Tibial artery (tissue), 4 donors: ENCODE measurements at regions of chr5 and their contacts with region 1.

Region 1: DNA sequence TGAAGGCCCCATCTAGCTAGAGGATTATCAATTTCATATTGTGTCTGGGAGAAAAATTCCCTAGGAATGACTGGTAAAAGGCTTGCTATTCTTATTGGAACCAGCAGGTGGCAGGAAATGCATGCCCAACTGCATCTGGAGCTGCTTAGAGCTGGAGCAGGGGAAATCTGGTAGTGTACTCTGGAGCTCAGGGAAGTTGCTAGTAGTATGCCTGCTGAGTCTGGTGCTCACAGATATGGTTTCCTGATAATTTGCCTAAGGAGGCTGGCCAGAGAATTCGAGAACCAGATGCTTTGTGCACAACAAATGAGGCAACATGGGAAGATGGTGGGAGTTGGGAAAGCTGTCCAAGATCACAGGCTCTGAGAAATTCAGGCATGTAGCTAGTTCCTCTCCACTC is 53.7 kb downstream of the G3BP1 start:
- DNase-seq: peak in 1 of 2 donors; percentile 45
- H3K4me3 ChIP-seq: no peak overlapping the region
- H3K27ac ChIP-seq: no peak overlapping the region
- H3K4me1 ChIP-seq: no peaks in the 10 kb centered on the region
- H3K27me3 ChIP-seq: no peaks in the 10 kb centered on the region
- CTCF ChIP-seq: peak; percentile 79 to 92

Region 2: DNA sequence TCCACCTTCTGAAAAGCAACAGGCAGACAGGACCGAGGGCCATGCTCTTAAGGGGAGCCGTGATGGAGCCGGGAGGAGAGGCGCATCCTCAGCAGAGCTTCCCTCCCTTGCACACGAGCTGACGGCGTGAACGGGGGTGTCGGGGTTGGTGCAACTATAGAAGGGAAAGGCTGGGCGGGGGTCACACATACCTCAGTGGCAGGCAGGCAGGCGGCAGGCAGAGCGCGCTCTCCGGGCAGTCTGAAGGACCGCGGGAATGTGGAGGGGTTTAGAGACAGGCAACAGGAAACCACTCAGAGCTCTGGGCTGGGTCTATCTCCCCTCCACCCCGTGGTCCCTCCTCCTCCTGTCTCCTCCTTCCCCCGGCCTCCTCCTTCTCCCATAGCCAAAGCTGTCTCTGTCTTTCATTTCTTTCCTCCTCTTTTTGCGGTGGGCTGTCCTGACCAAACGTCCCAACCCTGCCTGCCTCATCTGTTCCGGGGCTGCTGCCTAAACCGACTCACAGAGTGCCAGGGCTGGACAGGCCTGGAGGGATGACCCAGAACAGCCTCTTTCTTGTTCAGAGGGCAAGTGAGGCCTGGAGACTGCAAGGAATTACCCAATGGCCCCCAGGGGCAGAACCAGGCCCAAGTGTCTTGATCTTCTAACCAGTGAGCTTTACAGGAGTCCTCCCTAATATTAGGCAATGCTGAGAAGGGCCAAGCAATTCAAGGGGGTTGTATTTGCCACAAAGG is 138.6 kb before region 1 on chr5 and contains the start of gene SPARC:
- intact Hi-C with region 1: no loop called
- DNase-seq: peak; percentile 94 to 96
- H3K4me3 ChIP-seq: peak within 1 kb of the TSS; percentile 66 to 75
- H3K27ac ChIP-seq: peak within 1 kb of the TSS; percentile 89 to 91
- H3K4me1 ChIP-seq: peaks cover 0 to 41% (median 23%) of the 10 kb centered on the region in 4 donors
- H3K27me3 ChIP-seq: no peaks in the 10 kb centered on the region
- CTCF ChIP-seq: peak in 1 of 2 experiments; percentile 3

Region 3: DNA sequence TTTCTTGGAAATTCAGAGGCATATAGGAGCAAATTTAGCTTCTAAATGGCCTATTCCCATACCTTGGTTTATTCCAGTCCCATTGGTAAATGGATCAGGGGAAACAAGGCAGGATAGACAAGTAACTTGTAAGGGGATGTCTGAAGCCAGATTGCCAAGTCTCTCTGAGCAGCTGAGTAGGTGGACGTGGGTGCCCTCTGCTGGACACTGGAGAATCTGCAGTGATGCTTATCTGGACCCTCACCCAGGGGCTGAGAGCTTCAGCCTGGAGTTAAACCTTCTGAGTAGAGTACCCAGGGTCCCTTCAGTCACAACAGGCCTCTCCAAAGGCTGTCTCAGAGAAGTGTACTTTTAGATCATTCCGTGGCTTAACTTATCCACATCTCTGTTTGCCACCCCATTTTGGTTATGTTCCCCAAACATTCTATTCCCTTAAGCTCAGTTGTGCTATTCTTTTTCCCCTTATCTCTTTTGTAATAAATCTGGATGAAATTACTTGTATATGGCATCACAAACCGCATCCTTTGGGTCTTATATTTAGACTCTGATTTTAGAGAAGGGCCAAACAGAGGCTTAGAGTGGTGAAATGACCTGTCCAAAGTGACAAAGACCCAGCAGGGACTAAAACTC is 317.5 kb after region 1 on chr5:
- intact Hi-C with region 1: loop called (anchors 5 kb)
- DNase-seq: peak; percentile 37 to 67
- H3K4me3 ChIP-seq: no peak overlapping the region
- H3K27ac ChIP-seq: no peak overlapping the region
- H3K4me1 ChIP-seq: no peaks in the 10 kb centered on the region
- H3K27me3 ChIP-seq: no peaks in the 10 kb centered on the region
- CTCF ChIP-seq: peak; percentile 76 to 87

Region 4: DNA sequence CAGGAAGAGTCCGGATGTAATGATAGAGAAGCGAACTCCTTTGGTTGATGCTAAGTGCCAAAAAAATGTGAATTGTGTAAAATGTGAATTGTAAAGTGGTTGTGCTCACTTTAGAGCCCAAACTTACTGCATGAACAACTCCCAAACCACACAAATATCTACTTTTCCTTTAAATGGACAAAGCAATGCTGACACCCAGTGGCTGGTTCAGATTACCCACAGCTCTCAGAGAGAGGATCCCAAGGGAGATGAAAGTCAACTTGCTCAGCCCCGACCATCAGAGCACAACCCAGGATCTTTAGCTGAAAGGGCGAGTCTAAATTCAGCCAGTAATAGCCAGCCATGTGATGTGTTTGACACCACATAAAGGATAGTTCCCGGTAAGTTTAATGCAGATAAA is 446.0 kb after region 1 on chr5:
- intact Hi-C with region 1: loop called (anchors 10 kb)
- DNase-seq: no peak
- H3K4me3 ChIP-seq: no peak overlapping the region
- H3K27ac ChIP-seq: no peak overlapping the region
- H3K4me1 ChIP-seq: peaks cover 0 to 30% (median 4%) of the 10 kb centered on the region in 4 donors
- H3K27me3 ChIP-seq: no peaks in the 10 kb centered on the region
- CTCF ChIP-seq: peak; percentile 44 to 47

Region 5: DNA sequence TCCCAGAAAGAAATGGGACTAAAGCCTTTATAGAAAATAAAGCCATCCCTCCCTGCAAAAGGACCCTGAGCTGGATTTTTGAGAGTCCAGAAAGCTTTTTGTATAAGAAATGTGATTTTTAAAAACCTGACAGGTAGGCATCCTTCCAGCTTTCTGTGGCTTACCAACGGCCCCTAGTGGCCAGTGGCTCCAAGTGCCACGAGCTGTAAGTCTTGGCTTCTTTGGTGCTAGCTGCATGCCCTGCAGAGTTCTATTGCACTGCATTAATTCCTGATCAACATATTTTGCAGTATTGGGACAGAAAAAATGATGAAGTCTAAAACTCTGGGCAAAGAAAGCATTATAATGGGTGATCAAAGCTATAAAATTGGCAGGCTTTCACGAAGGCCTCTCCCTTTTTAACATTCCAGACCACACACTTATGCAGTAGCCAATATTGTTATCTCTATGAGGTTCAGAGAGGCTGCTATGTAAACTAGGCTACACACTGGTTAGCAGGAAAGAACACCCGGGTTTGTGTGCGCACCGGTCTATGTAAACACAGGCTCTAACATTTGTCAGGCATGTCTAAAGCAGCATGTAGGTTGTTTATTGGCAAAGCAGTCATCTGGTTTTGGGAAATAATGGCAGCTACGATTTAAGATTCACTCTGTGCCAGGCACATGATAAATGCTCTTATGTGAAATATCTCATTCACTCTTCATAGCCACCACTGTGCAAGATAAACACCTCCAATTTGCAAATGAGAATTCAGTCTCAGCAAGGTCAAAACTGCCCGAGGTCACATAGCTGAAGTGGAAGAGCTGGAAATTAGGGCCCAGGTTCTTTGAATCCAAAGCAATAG is 524.5 kb after region 1 on chr5:
- intact Hi-C with region 1: loop called (anchors 5 kb)
- DNase-seq: no peak
- H3K4me3 ChIP-seq: no peak overlapping the region
- H3K27ac ChIP-seq: no peak overlapping the region
- H3K4me1 ChIP-seq: no peaks in the 10 kb centered on the region
- H3K27me3 ChIP-seq: no peaks in the 10 kb centered on the region
- CTCF ChIP-seq: peak; percentile 59 to 72